ENCODE measurements at regions of chr5 and their contacts with region 1.

Region 1: GRCh38 chr5:74919487-74919886 is 53.3 kb upstream of the FAM169A start:
- DNase-seq: no peak
- H3K4me3 ChIP-seq: peak overlapping the region in 3 of 59 donors; percentile 1 to 23 (median 19)
- H3K27ac ChIP-seq: no peak overlapping the region
- H3K27me3 ChIP-seq: no peaks in the 10 kb centered on the region
- CTCF ChIP-seq: peak; percentile 55 to 89 (median 73)

Region 2: DNA sequence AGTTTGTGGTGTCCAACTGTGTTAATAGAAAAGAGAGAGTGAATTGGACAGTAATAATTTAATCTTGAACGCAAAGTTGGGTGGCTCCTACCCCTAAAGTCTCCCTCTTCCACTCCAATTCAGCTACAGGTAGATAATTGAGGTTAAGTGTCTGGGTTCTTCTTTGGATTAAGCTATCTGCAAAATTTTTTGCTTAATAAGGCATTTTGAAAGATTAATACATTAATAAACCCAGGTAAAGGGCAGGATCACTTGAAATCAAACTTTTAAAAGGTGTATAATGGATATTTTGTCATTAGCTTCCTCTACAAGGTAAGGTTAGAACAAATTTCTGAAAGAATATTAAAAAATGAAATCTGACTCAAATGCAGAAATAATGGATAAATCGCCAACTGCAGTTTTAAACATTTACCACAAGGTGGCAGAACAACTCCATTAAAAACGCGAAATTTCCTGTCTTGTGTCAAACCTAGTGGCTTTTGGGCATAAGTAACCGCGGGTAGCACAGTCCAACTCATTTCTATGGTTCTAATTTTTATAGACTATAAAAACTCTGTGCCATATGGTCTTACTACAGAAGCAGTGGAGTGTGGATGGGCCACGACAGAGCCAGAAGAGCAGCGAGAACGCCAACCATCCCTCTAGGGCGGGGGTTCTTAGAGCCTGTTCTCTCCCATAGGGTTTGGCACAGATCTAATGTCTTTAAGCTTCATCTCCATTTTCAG is 1017.0 kb before region 1 on chr5:
- intact Hi-C with region 1: loop called (anchors 10 kb)
- DNase-seq: peak in 4 of 10 donors; percentile 18 to 51 (median 36)
- H3K4me3 ChIP-seq: peak overlapping the region in 6 of 59 donors; percentile 6 to 26 (median 14)
- H3K27ac ChIP-seq: peak overlapping the region in 2 of 59 donors; percentile 8 to 35
- H3K27me3 ChIP-seq: no peaks in the 10 kb centered on the region
- CTCF ChIP-seq: peak; percentile 86 to 99 (median 94)

Region 3: GRCh38 chr5:74673011-74673790 is 246.3 kb before region 1 on chr5:
- intact Hi-C with region 1: loop called (anchors 1 to 5 kb)
- DNase-seq: peak in 7 of 10 donors; percentile 42 to 79 (median 59)
- H3K4me3 ChIP-seq: peak overlapping the region in 58 of 59 donors; percentile 1 to 68 (median 50)
- H3K27ac ChIP-seq: peak overlapping the region in 55 of 59 donors; percentile 2 to 92 (median 81)
- H3K27me3 ChIP-seq: no peaks in the 10 kb centered on the region
- CTCF ChIP-seq: peak; percentile 44 to 89 (median 73)

Region 4: GRCh38 chr5:74684900-74685851 is 234.3 kb before region 1 on chr5 and contains the start of gene HEXB:
- intact Hi-C with region 1: loop called in 1 of 2 experiments (anchors 5 kb)
- DNase-seq: peak; percentile 72 to 93 (median 84)
- H3K4me3 ChIP-seq: peak within 1 kb of the TSS; percentile 64 to 98 (median 88)
- H3K27ac ChIP-seq: peak within 1 kb of the TSS; percentile 9 to 97 (median 86)
- H3K27me3 ChIP-seq: no peaks in the 10 kb centered on the region
- CTCF ChIP-seq: peak in 24 of 56 donors; percentile 4 to 47 (median 22)
- total RNA-seq, gene HEXB: 30.9 to 75.5 (median 53.2) TPM